Activated CD4-positive, alpha-beta memory T cell treated with anti-CD3 and anti-CD28 coated beads, Interleukin-2, amount 10 ng/mL, durations not matched to agents 7 days and 5 days (primary cell): ENCODE measurements at regions of chr10 and their contacts with region 1.

Region 1: DNA sequence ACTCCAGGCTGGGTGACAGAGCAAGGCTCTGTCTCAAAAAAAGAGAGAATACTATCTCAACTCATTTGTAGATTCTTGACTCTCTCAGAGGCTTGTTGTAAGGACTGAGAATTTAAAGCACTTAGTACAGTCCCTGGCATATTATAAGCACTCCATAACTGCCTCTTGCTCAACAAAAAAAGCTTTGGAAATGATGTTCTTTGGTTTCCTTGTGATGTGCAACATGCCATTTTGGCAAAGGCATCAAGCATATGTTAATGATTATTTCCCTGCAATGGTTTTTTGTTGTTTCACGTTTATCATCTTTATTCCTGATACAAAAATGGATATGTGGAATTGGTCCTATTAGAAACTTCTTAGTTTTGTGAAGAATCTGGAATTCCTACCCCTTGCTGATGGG is 15.7 kb downstream of the NOLC1 start:
- DNase-seq: no peak
- H3K4me3 Mint-ChIP-seq: no peak overlapping the region
- H3K27ac Mint-ChIP-seq: no peak overlapping the region
- H3K4me1 Mint-ChIP-seq: peaks cover 23% of the 10 kb centered on the region
- H3K27me3 Mint-ChIP-seq: peaks cover 4% of the 10 kb centered on the region

Region 2: DNA sequence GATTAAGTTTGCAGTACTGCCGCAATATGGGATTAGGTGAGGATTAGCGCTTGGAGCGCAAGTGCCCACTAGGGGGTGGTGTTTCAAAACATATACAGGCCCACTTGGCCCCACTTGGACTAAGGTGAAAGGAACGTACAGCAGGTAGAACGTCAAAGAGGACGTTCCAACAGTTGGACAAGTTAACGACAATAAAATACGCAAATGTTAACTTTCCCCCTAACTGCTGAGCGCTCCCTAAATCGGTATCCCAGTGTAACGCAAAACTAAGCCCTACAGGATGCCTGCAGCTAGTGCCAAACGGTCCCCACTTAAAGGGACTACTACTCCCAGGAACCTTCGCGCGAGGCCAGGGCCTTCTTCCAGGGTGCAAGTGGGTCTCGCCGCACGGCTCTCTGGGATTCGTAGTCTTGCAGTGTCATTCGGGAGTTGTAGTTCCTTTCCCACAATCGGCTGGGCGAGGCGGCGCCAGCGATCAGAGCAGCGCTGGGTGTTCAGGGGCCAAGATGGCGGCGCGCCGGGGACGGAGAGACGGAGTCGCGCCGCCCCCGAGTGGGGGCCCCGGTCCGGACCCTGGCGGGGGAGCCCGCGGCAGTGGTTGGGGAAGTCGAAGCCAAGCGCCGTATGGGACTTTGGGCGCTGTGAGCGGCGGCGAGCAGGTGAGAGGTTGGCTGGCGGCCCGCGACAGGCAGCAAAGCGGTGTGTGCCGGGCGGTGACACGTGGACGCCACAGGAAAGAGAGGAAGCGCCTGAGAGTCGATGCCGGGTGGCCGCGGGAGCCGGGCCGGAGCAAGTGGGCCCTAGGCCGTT is 35.1 kb before region 1 on chr10 and contains the start of gene PPRC1:
- CTCF ChIA-PET with region 1: interaction called, 11 read pairs
- POLR2A ChIA-PET with region 1: no interaction called
- DNase-seq: peak; percentile 99
- H3K4me3 Mint-ChIP-seq: peak within 1 kb of the TSS; percentile 98
- H3K27ac Mint-ChIP-seq: peak within 1 kb of the TSS; percentile 96
- H3K4me1 Mint-ChIP-seq: peaks cover 46% of the 10 kb centered on the region
- H3K27me3 Mint-ChIP-seq: no peaks in the 10 kb centered on the region
- total RNA-seq, gene PPRC1: 32.5 to 35.8 TPM

Region 3: DNA sequence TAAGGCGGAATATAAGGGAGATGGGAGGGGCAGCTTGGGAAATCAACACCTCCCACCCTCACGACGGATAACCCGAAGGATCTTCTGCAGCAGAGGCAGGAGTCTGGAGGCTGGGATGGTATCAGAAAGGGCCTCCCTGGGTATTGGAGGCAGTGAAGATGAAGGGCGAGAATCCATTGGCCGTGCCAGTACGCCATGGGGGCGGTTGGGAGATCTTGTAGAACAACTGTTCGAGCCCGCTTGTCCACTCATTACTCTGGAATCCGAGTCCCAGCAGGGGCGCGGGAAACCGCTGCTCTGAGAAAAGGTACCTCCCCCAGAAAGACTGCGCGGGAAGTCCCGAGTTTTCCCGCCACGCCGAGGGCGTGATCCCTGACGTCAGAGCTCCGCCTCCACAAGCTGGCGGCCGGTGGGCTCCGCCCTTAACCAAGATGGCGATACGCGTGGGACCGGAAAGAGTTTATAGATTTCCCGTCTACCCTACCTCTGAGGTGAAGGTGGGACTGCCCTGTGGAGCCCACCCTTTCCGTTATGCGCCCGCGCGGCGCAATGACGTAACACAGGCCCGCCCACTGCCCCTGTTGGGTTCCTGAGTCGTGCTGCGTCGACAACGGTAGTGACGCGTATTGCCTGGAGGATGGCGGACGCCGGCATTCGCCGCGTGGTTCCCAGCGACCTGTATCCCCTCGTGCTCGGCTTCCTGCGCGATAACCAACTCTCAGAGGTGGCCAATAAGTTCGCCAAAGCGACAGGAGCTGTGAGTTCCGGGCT is 15.9 kb before region 1 on chr10 and contains the start of gene NOLC1:
- CTCF ChIA-PET with region 1: interaction called, 12 read pairs
- POLR2A ChIA-PET with region 1: interaction called, 10 read pairs
- DNase-seq: peak; percentile 100
- H3K4me3 Mint-ChIP-seq: peak within 1 kb of the TSS; percentile 90
- H3K27ac Mint-ChIP-seq: peak within 1 kb of the TSS; percentile 87
- H3K4me1 Mint-ChIP-seq: peaks cover 55% of the 10 kb centered on the region
- H3K27me3 Mint-ChIP-seq: no peaks in the 10 kb centered on the region
- total RNA-seq, gene NOLC1: 57.0 to 64.3 TPM

Region 4: DNA sequence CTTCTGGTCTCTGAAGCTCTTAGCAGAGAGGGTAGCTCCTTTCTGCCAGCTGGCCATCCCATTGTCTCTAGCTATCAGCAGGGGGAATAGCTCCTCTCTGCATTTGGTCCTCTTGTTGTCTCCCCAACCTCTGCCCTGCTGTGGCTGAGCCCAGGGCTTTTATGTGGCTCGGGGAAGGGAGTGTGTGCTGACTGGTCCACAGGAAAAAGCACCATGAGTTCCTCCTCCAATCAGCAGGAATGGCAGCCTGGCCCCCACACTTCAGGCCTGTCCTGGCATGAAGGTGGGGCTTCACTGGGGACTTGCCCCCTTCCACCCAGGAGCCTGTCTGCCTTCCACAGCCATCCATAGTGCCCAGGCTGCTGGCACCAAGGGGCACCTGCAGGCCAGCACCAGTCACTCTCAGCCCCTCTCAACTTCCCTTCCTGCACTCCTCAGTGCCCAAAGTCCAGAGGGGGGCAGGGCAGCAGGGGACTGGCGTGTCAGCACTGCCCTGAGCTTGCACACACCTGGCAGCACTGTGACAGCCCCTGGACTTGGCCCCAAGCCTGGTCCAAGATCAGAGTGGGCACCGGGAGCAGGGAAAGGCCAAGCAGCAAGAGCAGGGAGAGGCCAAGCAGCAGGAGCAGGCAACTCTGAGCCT is 20.6 kb after region 1 on chr10:
- CTCF ChIA-PET with region 1: interaction called, 32 read pairs
- POLR2A ChIA-PET with region 1: interaction called, 12 read pairs
- DNase-seq: no peak
- H3K4me3 Mint-ChIP-seq: no peak overlapping the region
- H3K27ac Mint-ChIP-seq: peak overlapping the region; percentile 78
- H3K4me1 Mint-ChIP-seq: peaks cover 17% of the 10 kb centered on the region
- H3K27me3 Mint-ChIP-seq: peaks cover 5% of the 10 kb centered on the region

Region 5: DNA sequence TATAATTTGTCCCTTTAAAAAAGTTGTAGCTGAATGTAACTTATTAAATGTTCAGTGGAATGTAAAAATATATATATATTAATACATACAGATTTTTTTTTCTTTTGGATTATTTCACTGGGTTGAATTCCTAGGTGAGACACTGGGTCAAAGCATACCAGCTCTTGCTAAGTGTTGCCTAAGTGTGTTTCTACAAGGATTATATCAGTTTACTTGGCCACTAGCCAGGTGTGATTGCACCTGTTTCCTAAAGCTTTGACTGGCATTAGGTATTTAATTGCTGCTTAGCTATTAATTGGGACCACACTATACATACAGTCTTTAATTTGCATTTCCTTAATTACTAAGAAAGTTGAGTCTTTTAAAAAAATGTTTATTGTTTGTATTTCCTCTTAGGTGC is 52.8 kb after region 1 on chr10:
- CTCF ChIA-PET with region 1: interaction called, 35 read pairs
- POLR2A ChIA-PET with region 1: interaction called, 5 read pairs
- DNase-seq: no peak
- H3K4me3 Mint-ChIP-seq: no peak overlapping the region
- H3K27ac Mint-ChIP-seq: no peak overlapping the region
- H3K4me1 Mint-ChIP-seq: peaks cover 3% of the 10 kb centered on the region
- H3K27me3 Mint-ChIP-seq: peaks cover 24% of the 10 kb centered on the region

Region 6: GRCh38 chr10:102399217-102400089 is 231.6 kb after region 1 on chr10:
- CTCF ChIA-PET with region 1: interaction called, 15 read pairs
- POLR2A ChIA-PET with region 1: interaction called, 6 read pairs
- DNase-seq: peak; percentile 91
- H3K4me3 Mint-ChIP-seq: peak overlapping the region; percentile 66
- H3K27ac Mint-ChIP-seq: peak overlapping the region; percentile 63
- H3K4me1 Mint-ChIP-seq: peaks cover 45% of the 10 kb centered on the region
- H3K27me3 Mint-ChIP-seq: no peaks in the 10 kb centered on the region